Heart right ventricle (tissue), 16 donors: ENCODE measurements at regions of chr12 and their contacts with region 1.

Region 1: GRCh38 chr12:91222746-91223145 is 40.1 kb upstream of the DCN start:
- DNase-seq: no peak
- ATAC-seq: no peak
- H3K4me3 ChIP-seq: no peak overlapping the region
- H3K27ac ChIP-seq: peak overlapping the region in 6 of 10 donors; percentile 2 to 49 (median 18)
- H3K4me1 ChIP-seq: peaks cover 0 to 7% (median 0%) of the 10 kb centered on the region in 9 donors
- H3K27me3 ChIP-seq: no peaks in the 10 kb centered on the region
- CTCF ChIP-seq: no peak

Region 2: GRCh38 chr12:91033251-91033650 is 189.5 kb before region 1 on chr12:
- intact Hi-C with region 1: loop called in 1 of 10 experiments (anchors 5 kb)
- DNase-seq: no peak
- ATAC-seq: no peak
- H3K4me3 ChIP-seq: no peak overlapping the region
- H3K27ac ChIP-seq: no peak overlapping the region
- H3K4me1 ChIP-seq: peaks cover 0 to 8% (median 0%) of the 10 kb centered on the region in 9 donors
- H3K27me3 ChIP-seq: no peaks in the 10 kb centered on the region
- CTCF ChIP-seq: no peak